ENCODE measurements at regions of chr14 and their contacts with region 1.

Region 1: DNA sequence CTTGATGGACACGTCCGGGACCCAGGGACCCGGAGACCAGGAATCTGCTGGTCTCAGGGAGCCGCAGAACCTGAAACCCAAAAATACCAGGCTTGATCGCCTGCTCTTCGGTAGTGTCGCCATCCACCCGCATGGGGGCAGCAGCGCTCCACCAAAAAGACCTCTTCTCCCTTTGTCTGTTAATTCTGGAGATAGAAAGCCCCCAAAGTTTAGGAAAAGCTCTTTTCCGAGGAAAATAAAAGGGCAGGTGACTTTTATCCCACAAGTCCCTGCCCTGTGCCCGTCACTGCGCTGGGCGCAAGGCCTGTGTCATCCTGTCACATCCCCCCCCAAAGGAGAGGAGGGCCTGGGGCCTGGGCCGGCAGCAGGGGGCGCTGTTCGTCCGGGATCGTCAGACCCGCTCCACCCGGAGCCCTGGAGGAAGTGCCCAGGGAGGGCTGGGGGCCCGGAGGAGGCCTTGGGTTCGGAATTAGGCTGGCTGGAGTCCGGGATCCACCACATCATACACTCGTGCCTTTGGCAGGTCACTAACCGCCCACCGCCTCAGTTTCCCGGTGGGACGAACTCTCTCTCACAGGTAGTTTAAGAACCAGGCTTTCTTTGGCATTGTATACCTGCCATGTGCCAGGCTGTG is 31.9 kb downstream of the DAD1 start:
- DNase-seq: peak; percentile 94
- ATAC-seq: peak; percentile 24
- H3K4me3 Mint-ChIP-seq: peak overlapping the region; percentile 76
- H3K27ac Mint-ChIP-seq: peak overlapping the region; percentile 97
- H3K4me1 Mint-ChIP-seq: peaks cover 90% of the 10 kb centered on the region
- H3K27me3 Mint-ChIP-seq: no peaks in the 10 kb centered on the region

Region 2: DNA sequence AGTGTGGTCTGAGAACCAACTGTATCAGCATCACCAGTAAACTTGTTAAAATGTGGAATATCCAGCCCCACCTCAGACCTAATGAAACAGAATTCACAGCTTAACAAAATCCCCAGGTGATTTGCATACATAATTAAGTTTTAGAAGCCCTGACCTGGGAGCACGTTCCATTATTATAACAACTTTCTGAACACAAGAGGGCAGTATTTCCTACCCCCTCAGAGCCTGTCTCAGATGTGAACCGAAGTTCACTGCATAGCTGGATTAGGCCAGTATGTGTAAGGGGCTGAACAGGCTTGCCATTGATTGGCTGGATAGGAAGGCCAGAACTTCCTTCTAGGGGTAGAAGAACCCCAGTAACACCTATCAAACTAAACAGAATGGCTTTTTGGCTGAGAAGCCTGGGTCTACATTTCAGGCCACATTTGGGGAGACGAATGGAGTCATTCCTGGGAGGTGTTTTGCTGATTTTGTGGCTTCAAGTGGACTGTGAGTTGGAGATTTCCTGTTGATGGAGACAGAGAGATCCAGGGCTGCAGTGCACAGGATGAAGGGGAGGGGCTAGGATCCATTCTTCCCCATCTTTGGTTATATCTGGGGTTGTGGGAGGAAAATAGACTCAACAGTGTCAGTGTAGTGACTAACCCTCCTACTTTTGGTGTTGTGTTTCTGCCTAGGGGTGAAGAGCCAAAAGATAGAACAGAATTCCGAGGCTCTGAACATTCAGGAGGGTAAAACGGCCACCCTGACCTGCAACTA is 788.8 kb before region 1 on chr14:
- CTCF ChIA-PET with region 1: interaction called, 3 read pairs
- POLR2A ChIA-PET with region 1: interaction called, 12 read pairs
- DNase-seq: peak; percentile 46
- ATAC-seq: peak; percentile 93
- H3K4me3 Mint-ChIP-seq: peak overlapping the region; percentile 39
- H3K27ac Mint-ChIP-seq: peak overlapping the region; percentile 62
- H3K4me1 Mint-ChIP-seq: no peaks in the 10 kb centered on the region
- H3K27me3 Mint-ChIP-seq: peaks cover 25% of the 10 kb centered on the region

Region 3: DNA sequence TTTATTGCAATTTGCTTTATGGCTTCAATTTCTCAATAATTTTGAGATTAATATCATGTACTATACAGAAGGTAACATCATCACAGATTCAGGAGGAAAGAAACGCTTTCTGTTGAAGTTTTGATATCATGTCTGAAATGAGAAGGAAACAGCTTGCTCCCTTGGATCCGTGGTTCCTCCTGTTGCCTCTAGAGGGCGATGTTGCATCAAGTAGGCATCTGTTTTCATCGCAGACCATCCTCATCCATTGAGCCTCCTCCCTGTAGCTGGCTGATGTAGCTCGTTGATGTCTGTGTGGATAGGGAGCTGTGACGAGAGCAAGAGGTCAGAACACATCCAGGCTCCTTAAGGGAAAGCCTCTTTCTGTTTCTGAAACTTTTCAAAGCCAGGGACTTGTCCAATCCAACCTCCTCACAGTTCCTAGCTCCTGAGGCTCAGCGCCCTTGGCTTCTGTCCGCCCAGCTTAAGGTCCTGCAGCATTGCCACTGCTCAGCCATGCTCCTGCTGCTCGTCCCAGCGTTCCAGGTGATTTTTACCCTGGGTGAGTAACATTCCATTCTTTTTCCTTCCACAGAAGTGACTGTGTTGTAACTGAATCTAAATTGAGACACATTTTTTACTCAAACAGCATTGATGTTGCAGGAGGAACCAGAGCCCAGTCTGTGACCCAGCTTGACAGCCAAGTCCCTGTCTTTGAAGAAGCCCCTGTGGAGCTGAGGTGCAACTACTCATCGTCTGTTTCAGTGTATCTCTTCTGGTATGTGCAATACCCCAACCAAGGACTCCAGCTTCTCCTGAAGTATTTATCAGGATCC is 578.7 kb before region 1 on chr14:
- CTCF ChIA-PET with region 1: interaction called, 17 read pairs
- POLR2A ChIA-PET with region 1: interaction called, 4 read pairs
- DNase-seq: peak; percentile 77
- ATAC-seq: peak; percentile 84
- H3K4me3 Mint-ChIP-seq: peak overlapping the region; percentile 69
- H3K27ac Mint-ChIP-seq: peak overlapping the region; percentile 53
- H3K4me1 Mint-ChIP-seq: peaks cover 23% of the 10 kb centered on the region
- H3K27me3 Mint-ChIP-seq: peaks cover 27% of the 10 kb centered on the region

Region 4: GRCh38 chr14:22271838-22272799 is 285.0 kb before region 1 on chr14:
- CTCF ChIA-PET with region 1: no interaction called
- POLR2A ChIA-PET with region 1: no interaction called
- DNase-seq: no peak
- ATAC-seq: no peak
- H3K4me3 Mint-ChIP-seq: peak overlapping the region; percentile 53
- H3K27ac Mint-ChIP-seq: peak overlapping the region; percentile 46
- H3K4me1 Mint-ChIP-seq: no peaks in the 10 kb centered on the region
- H3K27me3 Mint-ChIP-seq: no peaks in the 10 kb centered on the region

Region 5: DNA sequence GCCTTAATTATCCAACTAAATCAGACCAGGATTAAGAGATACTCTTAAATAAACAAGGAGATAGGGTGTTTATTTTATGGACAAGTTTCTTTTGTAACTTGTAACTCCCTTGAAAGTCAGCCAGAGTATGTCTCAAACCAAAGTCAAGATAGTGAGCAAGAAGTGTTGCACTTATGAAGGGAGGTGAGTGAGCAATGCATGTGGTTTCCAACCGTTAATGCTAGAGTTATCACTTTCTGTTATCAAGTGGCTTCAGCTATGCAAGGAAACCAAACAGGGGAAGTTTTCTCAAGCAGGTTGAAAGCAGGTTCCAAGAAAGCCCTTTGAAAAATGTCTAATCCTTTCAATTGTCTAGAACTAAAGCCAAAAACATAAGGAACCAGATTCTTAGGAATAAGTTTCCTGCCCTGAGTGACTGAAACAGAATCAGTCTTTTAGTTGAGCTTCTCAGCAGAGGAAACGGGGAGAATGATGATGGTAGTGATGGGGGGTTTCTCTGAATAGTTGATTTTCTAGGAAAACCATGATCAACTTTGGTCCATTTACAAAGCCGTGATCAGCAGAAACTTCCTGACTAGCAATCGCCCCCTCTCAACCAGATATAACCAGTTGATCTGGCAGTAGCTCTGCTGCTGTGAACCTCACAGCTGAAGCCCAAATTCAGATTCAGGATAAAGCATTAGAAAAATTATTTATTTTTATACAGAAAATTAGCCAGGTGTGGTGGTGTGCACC is 96.5 kb before region 1 on chr14:
- CTCF ChIA-PET with region 1: no interaction called
- POLR2A ChIA-PET with region 1: no interaction called
- DNase-seq: no peak
- ATAC-seq: no peak
- H3K4me3 Mint-ChIP-seq: no peak overlapping the region
- H3K27ac Mint-ChIP-seq: no peak overlapping the region
- H3K4me1 Mint-ChIP-seq: no peaks in the 10 kb centered on the region
- H3K27me3 Mint-ChIP-seq: no peaks in the 10 kb centered on the region

Region 6: GRCh38 chr14:22491683-22492621 is 65.2 kb before region 1 on chr14:
- CTCF ChIA-PET with region 1: interaction called, 4 read pairs
- POLR2A ChIA-PET with region 1: interaction called, 541 read pairs
- DNase-seq: no peak
- ATAC-seq: no peak
- H3K4me3 Mint-ChIP-seq: peak overlapping the region; percentile 86
- H3K27ac Mint-ChIP-seq: peak overlapping the region; percentile 93
- H3K4me1 Mint-ChIP-seq: peaks cover 8% of the 10 kb centered on the region
- H3K27me3 Mint-ChIP-seq: no peaks in the 10 kb centered on the region

Region 7: GRCh38 chr14:22519877-22520685 is 37.0 kb before region 1 on chr14:
- CTCF ChIA-PET with region 1: interaction called, 18 read pairs
- POLR2A ChIA-PET with region 1: interaction called, 541 read pairs
- DNase-seq: no peak
- ATAC-seq: peak; percentile 5
- H3K4me3 Mint-ChIP-seq: peak overlapping the region; percentile 89
- H3K27ac Mint-ChIP-seq: peak overlapping the region; percentile 96
- H3K4me1 Mint-ChIP-seq: peaks cover 92% of the 10 kb centered on the region
- H3K27me3 Mint-ChIP-seq: no peaks in the 10 kb centered on the region

Region 8: GRCh38 chr14:22536853-22537338 is 20.2 kb before region 1 on chr14:
- CTCF ChIA-PET with region 1: interaction called, 60 read pairs
- POLR2A ChIA-PET with region 1: interaction called, 540 read pairs
- DNase-seq: peak; percentile 87
- ATAC-seq: peak; percentile 85
- H3K4me3 Mint-ChIP-seq: peak overlapping the region; percentile 76
- H3K27ac Mint-ChIP-seq: peak overlapping the region; percentile 98
- H3K4me1 Mint-ChIP-seq: peaks cover 93% of the 10 kb centered on the region
- H3K27me3 Mint-ChIP-seq: no peaks in the 10 kb centered on the region

Region 9: GRCh38 chr14:22589096-22589839 is 32.2 kb after region 1 on chr14 and contains the start of gene DAD1:
- CTCF ChIA-PET with region 1: interaction called, 21 read pairs
- POLR2A ChIA-PET with region 1: interaction called, 18 read pairs
- DNase-seq: peak; percentile 100
- ATAC-seq: peak; percentile 91
- H3K4me3 Mint-ChIP-seq: peak within 1 kb of the TSS; percentile 99
- H3K27ac Mint-ChIP-seq: peak within 1 kb of the TSS; percentile 100
- H3K4me1 Mint-ChIP-seq: peaks cover 55% of the 10 kb centered on the region
- H3K27me3 Mint-ChIP-seq: peaks cover 8% of the 10 kb centered on the region
- total RNA-seq, gene DAD1: 130 to 147 TPM

Region 10: GRCh38 chr14:22753586-22753985 is 196.5 kb after region 1 on chr14:
- CTCF ChIA-PET with region 1: no interaction called
- POLR2A ChIA-PET with region 1: no interaction called
- DNase-seq: no peak
- ATAC-seq: no peak
- H3K4me3 Mint-ChIP-seq: no peak overlapping the region
- H3K27ac Mint-ChIP-seq: no peak overlapping the region
- H3K4me1 Mint-ChIP-seq: peaks cover 4% of the 10 kb centered on the region
- H3K27me3 Mint-ChIP-seq: peaks cover 6% of the 10 kb centered on the region

Measured in activated CD8-positive, alpha-beta T cell treated with anti-CD3 and anti-CD28 coated beads, Interleukin-2, amount 10 ng/mL, durations not matched to agents 7 days and 5 days (primary cell).